OCI-LY7 (cell line): ENCODE measurements at regions of chrX and their contacts with region 1.

Region 1: DNA sequence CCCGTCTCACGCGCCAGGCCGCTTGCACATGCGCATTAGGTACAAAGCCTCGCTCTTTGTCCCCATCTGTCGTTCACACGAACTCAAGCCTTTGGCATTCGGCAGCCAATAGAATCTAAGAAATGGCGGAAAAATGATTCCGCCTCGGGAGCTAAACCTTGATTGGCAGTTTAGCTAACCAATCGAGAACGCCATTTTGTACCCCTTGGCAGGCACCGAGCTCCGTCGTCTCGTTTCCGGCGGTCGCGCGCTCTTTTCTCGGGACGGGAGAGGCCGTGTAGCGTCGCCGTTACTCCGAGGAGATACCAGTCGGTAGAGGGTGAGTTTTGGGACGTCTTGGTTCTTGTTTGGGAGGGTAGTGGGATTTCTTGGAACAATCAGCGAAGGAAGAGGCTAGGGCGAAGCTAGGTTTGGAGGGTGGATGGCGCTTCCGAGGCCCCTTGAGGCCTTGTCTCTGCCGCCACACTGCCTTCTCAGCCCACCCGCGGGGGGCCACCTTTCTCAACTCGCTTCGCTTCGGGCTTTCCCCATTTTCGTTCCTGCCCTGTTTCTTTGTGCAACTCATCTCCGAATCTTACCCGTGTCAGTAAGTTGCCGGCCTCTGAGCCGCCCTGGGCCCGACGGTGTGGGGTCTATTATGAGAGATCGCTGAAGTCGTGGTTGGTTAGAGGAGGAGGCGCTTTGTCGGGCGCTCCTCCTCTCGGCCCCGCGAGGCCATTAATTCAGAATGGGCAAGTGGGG is at the start of gene NONO:
- DNase-seq: peak; percentile 99
- H3K4me3 ChIP-seq: peak within 1 kb of the TSS; percentile 99
- H3K27ac ChIP-seq: peak within 1 kb of the TSS; percentile 86
- H3K4me1 ChIP-seq: peaks cover 24% of the 10 kb centered on the region
- CTCF ChIP-seq: 0 out of 2 replicates have a peak, but pooled peaks have one; percentile 28
- total RNA-seq, gene NONO: 379 and 508 TPM in 2 replicates

Region 2: DNA sequence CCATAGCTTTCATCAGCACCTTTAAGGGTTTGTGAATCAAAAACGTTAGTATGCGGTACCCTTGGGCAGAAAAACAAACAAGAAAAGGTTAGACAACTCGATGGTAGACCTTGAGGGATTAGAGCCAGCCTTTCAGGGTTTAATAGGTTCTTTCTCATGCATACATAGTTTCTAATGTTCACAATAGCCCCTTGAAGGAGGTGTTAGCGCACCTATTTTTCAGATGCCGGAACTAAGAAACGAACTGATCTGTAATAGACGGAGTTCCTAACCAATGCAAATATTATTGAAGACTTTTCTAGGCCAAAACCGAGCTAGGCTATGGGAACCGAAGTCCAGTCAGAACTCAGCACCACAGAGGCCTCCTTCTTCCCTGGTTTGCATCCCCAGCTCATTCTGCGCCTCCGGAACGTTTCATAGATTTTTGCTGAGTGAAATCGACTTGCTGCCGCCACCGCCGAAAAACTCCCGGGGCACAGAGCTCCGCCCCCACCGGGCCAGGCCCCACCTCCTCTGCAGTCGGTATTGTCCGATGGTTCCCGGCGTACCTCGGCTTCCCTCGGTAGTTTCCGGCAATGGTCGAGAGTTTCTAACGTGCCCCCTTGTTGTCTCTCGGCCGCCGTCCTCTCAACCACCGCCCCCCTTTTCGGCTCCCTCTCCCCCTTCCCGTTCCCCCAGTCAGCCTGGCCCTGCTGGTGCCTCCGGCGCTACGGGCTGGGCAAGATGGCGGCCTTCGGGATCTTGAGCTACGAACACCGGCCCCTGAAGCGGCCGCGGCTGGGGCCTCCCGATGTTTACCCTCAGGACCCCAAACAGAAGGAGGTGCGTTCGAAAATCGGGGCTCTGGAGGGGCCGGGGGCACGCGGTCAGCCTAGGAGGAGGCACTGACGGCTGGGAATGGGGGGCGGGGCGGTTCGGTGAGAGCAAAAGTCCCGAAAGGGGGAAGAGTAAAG is 165.3 kb before region 1 on chrX and contains the start of gene MED12:
- CTCF ChIA-PET with region 1: no interaction called
- POLR2A ChIA-PET with region 1: interaction called, 3 read pairs
- intact Hi-C with region 1: loop called (anchors 10 kb)
- DNase-seq: peak; percentile 77
- H3K4me3 ChIP-seq: peak within 1 kb of the TSS; percentile 81
- H3K27ac ChIP-seq: peak within 1 kb of the TSS; percentile 58
- H3K4me1 ChIP-seq: peaks cover 27% of the 10 kb centered on the region
- CTCF ChIP-seq: no peak
- total RNA-seq, gene MED12: 20.5 and 23.1 TPM in 2 replicates

Region 3: DNA sequence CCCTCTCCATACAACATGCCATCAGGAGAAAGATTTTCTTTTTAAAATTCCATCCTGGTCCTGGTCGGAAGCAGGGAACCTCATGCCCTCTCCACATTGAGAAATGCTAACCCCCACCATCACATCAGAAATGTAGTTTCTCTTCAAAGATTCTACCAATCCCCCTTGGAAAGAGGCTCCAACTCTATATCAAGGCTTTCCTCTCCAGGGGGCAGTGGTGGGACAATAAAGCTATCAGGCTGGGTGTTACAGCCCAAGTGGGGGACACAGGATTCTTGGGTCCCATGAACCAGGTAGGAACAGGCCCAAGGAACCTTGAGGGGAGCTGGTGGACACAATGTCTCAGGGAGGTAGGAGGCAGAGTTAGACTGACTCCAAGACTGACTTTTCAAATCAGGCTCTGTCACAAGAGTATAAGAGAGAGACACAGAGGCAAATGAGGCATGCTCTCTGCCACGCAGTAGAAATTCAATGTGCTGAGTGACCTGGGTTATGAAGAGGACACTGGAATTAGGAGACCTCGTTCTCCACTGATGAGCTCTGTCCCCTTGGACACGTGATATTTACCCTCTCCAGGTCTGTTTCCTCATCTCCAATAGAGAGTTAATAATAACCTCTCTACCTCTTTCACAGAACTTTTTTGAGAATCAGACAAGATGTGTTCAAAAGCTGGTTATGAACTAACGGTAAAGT is 56.1 kb before region 1 on chrX:
- CTCF ChIA-PET with region 1: no interaction called
- POLR2A ChIA-PET with region 1: no interaction called
- intact Hi-C with region 1: no loop called
- DNase-seq: no peak
- H3K4me3 ChIP-seq: no peak overlapping the region
- H3K27ac ChIP-seq: no peak overlapping the region
- H3K4me1 ChIP-seq: no peaks in the 10 kb centered on the region
- CTCF ChIP-seq: peak; percentile 34

Region 4: GRCh38 chrX:71254092-71254941 is 29.3 kb before region 1 on chrX and contains the start of gene ZMYM3:
- CTCF ChIA-PET with region 1: interaction called, 4 read pairs
- POLR2A ChIA-PET with region 1: interaction called, 11 read pairs
- intact Hi-C with region 1: loop called (anchors 1 kb)
- DNase-seq: peak; percentile 90
- H3K4me3 ChIP-seq: peak within 1 kb of the TSS; percentile 96
- H3K27ac ChIP-seq: peak within 1 kb of the TSS; percentile 85
- H3K4me1 ChIP-seq: peaks cover 24% of the 10 kb centered on the region
- CTCF ChIP-seq: no peak
- total RNA-seq, gene ZMYM3: 21.8 and 23.8 TPM in 2 replicates

Region 5: GRCh38 chrX:71365876-71366673 is 82.5 kb after region 1 on chrX and contains the start of gene TAF1:
- CTCF ChIA-PET with region 1: no interaction called
- POLR2A ChIA-PET with region 1: interaction called, 18 read pairs
- intact Hi-C with region 1: no loop called
- DNase-seq: peak; percentile 96
- H3K4me3 ChIP-seq: peak within 1 kb of the TSS; percentile 95
- H3K27ac ChIP-seq: peak within 1 kb of the TSS; percentile 87
- H3K4me1 ChIP-seq: peaks cover 19% of the 10 kb centered on the region
- CTCF ChIP-seq: no peak
- total RNA-seq, gene TAF1: 30.2 and 50.8 TPM in 2 replicates

Region 6: GRCh38 chrX:71541210-71542022 is 257.8 kb after region 1 on chrX:
- CTCF ChIA-PET with region 1: no interaction called
- POLR2A ChIA-PET with region 1: no interaction called
- intact Hi-C with region 1: loop called (anchors 10 kb)
- DNase-seq: peak; percentile 68
- H3K4me3 ChIP-seq: peak overlapping the region; percentile 54
- H3K27ac ChIP-seq: peak overlapping the region; percentile 73
- H3K4me1 ChIP-seq: peaks cover 59% of the 10 kb centered on the region
- CTCF ChIP-seq: no peak